Dendritic cell treated with granulocyte-macrophage colony-stimulating factor and Interleukin-4, amounts not matched to agents 40 ng/mL and 50 ng/mL, for 4 days (primary cell): ENCODE measurements at regions of chr1 and their contacts with region 1.

Region 1: DNA sequence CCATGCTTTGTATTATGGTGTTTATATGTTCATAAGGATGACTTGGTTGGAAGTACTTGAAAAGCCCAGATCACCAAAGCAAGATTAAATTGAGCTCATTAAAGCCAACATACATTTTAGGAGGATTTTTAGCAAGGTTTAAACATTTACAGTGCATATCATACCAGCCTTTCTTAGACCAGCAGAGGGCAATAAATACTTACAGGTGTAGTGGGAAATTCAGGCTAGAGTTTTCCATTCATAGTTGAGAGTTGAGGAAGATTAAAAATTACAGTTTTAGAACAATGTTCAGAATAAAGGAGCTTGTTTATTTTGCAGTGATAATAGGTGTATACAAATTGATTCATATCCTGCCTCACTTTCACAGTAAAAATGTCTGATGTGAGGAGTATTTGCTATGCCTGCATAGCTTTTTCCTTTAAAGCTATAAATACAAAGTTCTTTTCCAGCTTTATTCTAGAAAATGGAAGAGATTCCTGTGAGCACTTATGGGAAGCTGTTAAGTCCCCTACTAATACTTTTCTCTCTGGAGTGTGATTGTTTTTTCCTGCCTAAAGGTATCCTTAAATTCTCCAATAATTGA is 35.3 kb downstream of the DTL start:
- H3K4me3 Mint-ChIP-seq: no peak overlapping the region
- H3K27ac Mint-ChIP-seq: no peak overlapping the region
- H3K4me1 Mint-ChIP-seq: no peaks in the 10 kb centered on the region
- H3K27me3 Mint-ChIP-seq: no peaks in the 10 kb centered on the region

Region 2: GRCh38 chr1:212291505-212292134 is 220.8 kb after region 1 on chr1:
- intact Hi-C with region 1: loop called (anchors 2 kb)
- H3K4me3 Mint-ChIP-seq: no peak overlapping the region
- H3K27ac Mint-ChIP-seq: no peak overlapping the region
- H3K4me1 Mint-ChIP-seq: peaks cover 73% of the 10 kb centered on the region
- H3K27me3 Mint-ChIP-seq: no peaks in the 10 kb centered on the region

Region 3: GRCh38 chr1:212315907-212316306 is 245.1 kb after region 1 on chr1:
- intact Hi-C with region 1: loop called (anchors 5 kb)
- H3K4me3 Mint-ChIP-seq: no peak overlapping the region
- H3K27ac Mint-ChIP-seq: no peak overlapping the region
- H3K4me1 Mint-ChIP-seq: peaks cover 18% of the 10 kb centered on the region
- H3K27me3 Mint-ChIP-seq: no peaks in the 10 kb centered on the region

Region 4: DNA sequence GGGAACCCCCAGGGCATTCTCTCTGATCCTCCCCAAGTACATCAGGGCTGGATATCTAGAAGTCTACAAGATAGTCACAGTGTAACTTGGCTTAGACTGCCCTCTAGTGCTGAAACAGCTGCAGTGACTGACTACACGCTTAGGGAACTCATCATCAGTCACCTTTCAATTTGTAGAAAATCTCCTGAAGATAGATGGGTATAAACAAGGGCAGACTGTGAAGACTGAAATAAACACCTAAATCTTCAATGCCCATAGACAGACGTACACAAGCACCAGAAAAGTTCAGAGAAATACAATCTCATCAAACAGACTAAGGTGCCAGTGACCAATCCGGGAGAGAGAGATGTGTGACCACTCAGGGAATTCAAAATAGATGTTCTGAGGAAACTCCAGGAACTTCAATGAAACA is 297.3 kb after region 1 on chr1:
- intact Hi-C with region 1: loop called (anchors 2 kb)
- H3K4me3 Mint-ChIP-seq: no peak overlapping the region
- H3K27ac Mint-ChIP-seq: no peak overlapping the region
- H3K4me1 Mint-ChIP-seq: no peaks in the 10 kb centered on the region
- H3K27me3 Mint-ChIP-seq: no peaks in the 10 kb centered on the region